ENCODE measurements at regions of chr3 and their contacts with region 1.

Region 1: GRCh38 chr3:33440323-33441232 is at the start of gene UBP1:
- DNase-seq: peak; percentile 100
- ATAC-seq: peak; percentile 89
- H3K4me3 ChIP-seq: peak within 1 kb of the TSS; percentile 86
- H3K27ac ChIP-seq: peak within 1 kb of the TSS; percentile 99
- H3K4me1 ChIP-seq: no peaks in the 10 kb centered on the region
- H3K27me3 ChIP-seq: no peaks in the 10 kb centered on the region
- CTCF ChIP-seq: 0 out of 6 replicates have a peak, but pooled peaks of 2 of the 3 experiments have one; percentile 2 to 10
- EP300 ChIP-seq: no peak
- POLR2A ChIP-seq: peak; percentile 96
- RAD21 ChIP-seq: no peak
- polyA plus RNA-seq, gene UBP1: 9.8 to 14.4 TPM

Region 2: GRCh38 chr3:33426068-33426467 is 14.5 kb before region 1 on chr3:
- CTCF ChIA-PET with region 1: interaction called, 6 read pairs
- POLR2A ChIA-PET with region 1: interaction called, 53 read pairs
- RAD21 ChIA-PET with region 1: interaction called, 11 read pairs
- SMC1A ChIA-PET with region 1: interaction called, 43 read pairs
- in situ Hi-C with region 1: no loop called
- intact Hi-C with region 1: no loop called
- DNase-seq: no peak
- ATAC-seq: no peak
- H3K4me3 ChIP-seq: no peak overlapping the region
- H3K27ac ChIP-seq: no peak overlapping the region
- H3K4me1 ChIP-seq: peaks cover 22% of the 10 kb centered on the region
- H3K27me3 ChIP-seq: no peaks in the 10 kb centered on the region
- CTCF ChIP-seq: no peak
- EP300 ChIP-seq: no peak
- POLR2A ChIP-seq: no peak
- RAD21 ChIP-seq: no peak

Region 3: GRCh38 chr3:33717866-33718594 is 277.5 kb after region 1 on chr3 and contains the start of gene CLASP2:
- CTCF ChIA-PET with region 1: no interaction called
- POLR2A ChIA-PET with region 1: no interaction called
- RAD21 ChIA-PET with region 1: interaction called, 3 read pairs
- SMC1A ChIA-PET with region 1: no interaction called
- in situ Hi-C with region 1: no loop called
- intact Hi-C with region 1: loop called (anchors 5 kb)
- DNase-seq: peak; percentile 42
- ATAC-seq: peak; percentile 91
- H3K4me3 ChIP-seq: peak within 1 kb of the TSS; percentile 77
- H3K27ac ChIP-seq: peak within 1 kb of the TSS; percentile 82
- H3K4me1 ChIP-seq: no peaks in the 10 kb centered on the region
- H3K27me3 ChIP-seq: no peaks in the 10 kb centered on the region
- CTCF ChIP-seq: no peak
- EP300 ChIP-seq: no peak
- POLR2A ChIP-seq: peak; percentile 89
- RAD21 ChIP-seq: no peak
- polyA plus RNA-seq, gene CLASP2: 4.0 to 5.3 TPM

Region 4: DNA sequence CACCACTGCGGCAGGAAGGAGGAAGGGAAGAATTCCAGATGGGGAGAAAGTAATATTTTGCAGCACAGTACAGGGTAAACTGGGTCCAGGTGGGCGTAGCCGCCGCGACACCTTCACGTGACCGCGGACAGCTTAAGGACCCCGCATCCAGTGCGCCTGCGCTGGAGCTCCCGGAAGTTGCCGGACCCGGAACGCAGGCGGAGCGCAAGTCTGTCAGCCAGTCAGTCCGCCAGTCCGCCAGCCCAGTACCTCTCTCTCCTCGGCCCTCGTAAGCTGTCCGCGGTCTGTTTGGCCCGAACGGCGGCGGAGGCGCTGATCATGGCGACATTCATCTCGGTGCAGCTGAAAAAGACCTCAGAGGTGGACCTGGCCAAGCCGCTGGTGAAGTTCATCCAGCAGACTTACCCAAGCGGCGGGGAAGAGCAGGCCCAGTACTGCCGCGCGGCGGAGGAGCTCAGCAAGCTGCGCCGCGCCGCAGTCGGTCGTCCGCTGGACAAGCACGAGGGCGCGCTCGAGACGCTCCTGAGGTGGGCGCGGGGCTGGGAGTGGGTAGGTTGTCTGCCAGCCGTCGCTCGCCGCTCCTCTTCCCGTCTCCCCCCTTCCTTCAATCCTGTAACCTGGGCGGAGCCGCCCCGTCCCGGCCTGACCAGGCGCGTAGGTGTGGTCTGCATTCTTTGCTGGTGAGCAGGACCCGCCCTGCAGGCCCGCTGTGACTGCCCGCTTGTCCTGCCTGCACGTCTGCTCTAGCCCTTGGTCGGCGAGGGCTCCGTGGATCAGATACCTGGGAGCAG is 358.0 kb after region 1 on chr3 and contains the start of gene PDCD6IP:
- CTCF ChIA-PET with region 1: interaction called, 5 read pairs
- POLR2A ChIA-PET with region 1: interaction called, 7 read pairs
- RAD21 ChIA-PET with region 1: interaction called, 9 read pairs
- SMC1A ChIA-PET with region 1: no interaction called
- in situ Hi-C with region 1: no loop called
- intact Hi-C with region 1: loop called (anchors 10 kb)
- DNase-seq: peak; percentile 74
- ATAC-seq: peak; percentile 91
- H3K4me3 ChIP-seq: peak within 1 kb of the TSS; percentile 96
- H3K27ac ChIP-seq: peak within 1 kb of the TSS; percentile 83
- H3K4me1 ChIP-seq: no peaks in the 10 kb centered on the region
- H3K27me3 ChIP-seq: no peaks in the 10 kb centered on the region
- CTCF ChIP-seq: peak in 2 of 3 experiments; percentile 12 to 20; a peak in 3 of 6 replicates
- EP300 ChIP-seq: no peak
- POLR2A ChIP-seq: peak; percentile 99
- RAD21 ChIP-seq: no peak
- polyA plus RNA-seq, gene PDCD6IP: 16.0 to 20.0 TPM